Heart left ventricle (tissue), 16 donors: ENCODE measurements at regions of chr16 and their contacts with region 1.

Region 1: GRCh38 chr16:24262816-24263215 is 6.7 kb downstream of the CACNG3 start:
- DNase-seq: no peak
- ATAC-seq: no peak
- H3K4me3 ChIP-seq: no peak overlapping the region
- H3K27ac ChIP-seq: no peak overlapping the region
- H3K4me1 ChIP-seq: no peaks in the 10 kb centered on the region
- H3K27me3 ChIP-seq: peaks cover 0 to 36% (median 6%) of the 10 kb centered on the region in 9 donors
- CTCF ChIP-seq: no peak
- POLR2A ChIP-seq: no peak

Region 2: DNA sequence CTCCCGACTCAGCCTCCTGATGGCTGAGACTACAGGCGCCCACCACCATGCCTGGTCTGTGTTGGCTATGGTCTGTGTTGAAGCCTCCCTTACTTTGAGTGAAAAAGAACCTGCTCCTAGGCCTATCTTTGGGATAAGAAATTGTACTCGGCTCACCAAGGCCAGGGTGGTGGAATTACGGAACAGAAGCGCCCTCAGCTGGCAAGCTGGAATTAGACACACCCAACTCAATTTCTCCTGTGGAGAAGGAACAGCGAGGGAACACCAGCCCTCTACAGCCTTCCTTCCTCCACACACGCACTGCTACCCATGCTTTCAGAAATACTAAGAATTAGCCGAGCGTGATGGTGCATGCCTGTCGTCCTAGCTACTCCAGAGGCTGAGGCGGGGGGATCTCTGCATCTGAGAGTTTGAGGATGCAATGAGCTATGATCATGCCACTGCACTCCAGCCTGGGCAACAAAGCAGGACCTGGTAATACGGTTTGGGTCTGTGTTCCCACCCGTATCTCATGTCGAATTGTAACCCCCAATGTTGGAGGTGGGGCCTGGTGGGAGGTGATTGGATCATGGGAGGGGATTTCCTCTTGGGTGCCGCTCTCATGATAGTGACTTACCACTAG is 236.5 kb after region 1 on chr16:
- intact Hi-C with region 1: loop called in 4 of 10 experiments (anchors 10 kb)
- DNase-seq: no peak
- ATAC-seq: peak in 3 of 4 donors; percentile 38 to 48 (median 39)
- H3K4me3 ChIP-seq: no peak overlapping the region
- H3K27ac ChIP-seq: no peak overlapping the region
- H3K4me1 ChIP-seq: no peaks in the 10 kb centered on the region
- H3K27me3 ChIP-seq: peaks cover 0 to 20% (median 0%) of the 10 kb centered on the region in 9 donors
- CTCF ChIP-seq: peak in 7 of 12 donors; percentile 14 to 39 (median 34)
- POLR2A ChIP-seq: no peak